Right ventricle myocardium superior (tissue), 1 donor: ENCODE measurements at regions of chr6 and their contacts with region 1.

Region 1: DNA sequence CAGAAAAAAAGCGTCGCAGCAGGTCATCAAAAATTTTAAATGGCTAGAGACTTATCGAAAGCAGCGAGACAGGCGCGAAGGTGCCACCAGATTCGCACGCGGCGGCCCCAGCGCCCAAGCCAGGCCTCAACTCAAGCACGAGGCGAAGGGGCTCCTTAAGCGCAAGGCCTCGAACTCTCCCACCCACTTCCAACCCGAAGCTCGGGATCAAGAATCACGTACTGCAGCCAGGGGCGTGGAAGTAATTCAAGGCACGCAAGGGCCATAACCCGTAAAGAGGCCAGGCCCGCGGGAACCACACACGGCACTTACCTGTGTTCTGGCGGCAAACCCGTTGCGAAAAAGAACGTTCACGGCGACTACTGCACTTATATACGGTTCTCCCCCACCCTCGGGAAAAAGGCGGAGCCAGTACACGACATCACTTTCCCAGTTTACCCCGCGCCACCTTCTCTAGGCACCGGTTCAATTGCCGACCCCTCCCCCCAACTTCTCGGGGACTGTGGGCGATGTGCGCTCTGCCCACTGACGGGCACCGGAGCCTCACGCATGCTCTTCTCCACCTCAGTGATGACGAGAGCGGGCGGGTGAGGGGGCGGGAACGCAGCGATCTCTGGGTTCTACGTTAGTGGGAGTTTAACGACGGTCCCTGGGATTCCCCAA is at the start of gene EEF1A1:
- DNase-seq: peak; percentile 99
- ATAC-seq: peak; percentile 91
- total RNA-seq, gene EEF1A1: 1,362 TPM

Region 2: GRCh38 chr6:73580247-73581149 is 59.7 kb after region 1 on chr6:
- intact Hi-C with region 1: loop called (anchors 10 kb)
- DNase-seq: peak; percentile 85
- ATAC-seq: peak; percentile 91

Region 3: GRCh38 chr6:73644941-73645591 is 124.2 kb after region 1 on chr6:
- intact Hi-C with region 1: no loop called
- DNase-seq: no peak
- ATAC-seq: peak; percentile 31

Region 4: DNA sequence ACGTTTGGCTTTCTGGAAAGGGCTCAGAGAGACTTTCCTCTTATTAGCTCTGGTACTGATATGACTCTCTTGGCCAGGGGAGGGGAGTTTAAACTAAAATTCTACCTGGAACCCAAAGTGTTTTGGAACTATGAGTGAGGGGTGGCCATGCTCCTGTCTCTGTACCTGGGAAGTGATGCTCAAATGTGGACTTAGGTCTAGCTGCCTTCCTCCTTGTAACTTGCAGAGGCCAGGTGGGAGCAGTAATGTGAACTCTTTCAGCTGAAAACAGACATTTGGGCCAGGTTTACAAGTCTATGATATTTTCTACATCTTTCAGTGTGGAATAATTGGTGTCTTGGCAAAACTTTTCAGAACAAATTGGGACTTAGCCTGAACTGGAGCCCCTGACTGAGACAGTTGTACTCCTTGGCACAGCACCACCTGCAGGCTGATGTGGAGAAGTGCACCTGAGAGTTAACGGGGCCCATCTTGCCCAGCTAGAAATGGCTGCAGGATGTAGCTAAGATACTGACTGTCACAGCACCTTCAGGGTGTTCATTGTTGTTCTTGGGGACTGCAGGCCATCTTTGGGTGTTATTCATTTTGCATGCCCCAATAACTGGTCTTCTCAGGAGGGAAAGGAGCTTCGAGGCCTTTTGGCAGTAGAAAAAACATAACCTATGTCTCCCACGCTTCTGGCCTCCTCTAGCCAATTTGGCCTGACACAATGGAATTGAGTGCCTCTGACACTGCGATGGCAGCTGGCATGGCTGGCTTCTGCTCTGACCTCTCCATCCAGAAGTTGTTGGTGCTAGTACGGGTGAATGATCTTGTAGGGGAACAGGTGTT is 212.2 kb after region 1 on chr6:
- intact Hi-C with region 1: loop called (anchors 10 kb)
- DNase-seq: peak; percentile 58
- ATAC-seq: peak; percentile 95